Endothelial cell of umbilical vein (primary cell): ENCODE measurements at regions of chr12 and their contacts with region 1.

Region 1: GRCh38 chr12:122834104-122834920 is 945 bp upstream of the HIP1R start:
- DNase-seq: peak; percentile 83
- H3K4me3 ChIP-seq: peak overlapping the region; percentile 1 to 91 (median 53)
- H3K27ac ChIP-seq: peak overlapping the region; percentile 19
- H3K4me1 ChIP-seq: peaks cover 17% of the 10 kb centered on the region
- H3K27me3 ChIP-seq: no peaks in the 10 kb centered on the region
- CTCF ChIP-seq: no peak
- POLR2A ChIP-seq: no peak

Region 2: DNA sequence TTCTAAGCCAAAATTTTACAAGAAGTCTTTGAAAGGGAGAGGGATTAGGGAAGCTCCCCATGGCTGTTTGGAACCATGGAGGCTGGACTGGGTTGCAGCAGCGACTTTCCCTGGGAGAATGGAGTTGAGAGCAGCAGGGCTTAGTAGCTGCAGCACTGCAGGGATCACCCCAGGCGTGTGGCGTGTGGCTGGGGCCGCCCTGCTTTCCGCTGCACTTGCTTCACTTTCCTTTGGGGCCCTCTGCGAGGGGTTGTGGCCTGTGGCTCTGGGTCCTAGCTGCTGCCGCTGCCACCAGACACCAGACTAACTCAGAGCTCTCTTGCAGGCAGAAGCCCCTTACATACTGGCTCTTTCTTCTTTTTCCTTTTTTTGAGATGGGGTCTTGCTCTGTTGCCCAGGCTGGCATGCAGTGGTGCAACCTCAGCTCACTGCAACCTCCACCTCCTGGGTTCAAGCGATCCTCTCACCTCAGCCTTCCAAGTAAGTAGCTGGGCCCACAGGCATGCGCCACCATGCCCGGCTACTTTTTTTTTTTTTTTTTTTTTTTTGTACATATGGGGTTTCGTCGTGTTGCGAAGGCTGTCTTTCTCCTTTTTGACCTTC is 34.6 kb before region 1 on chr12:
- CTCF ChIA-PET with region 1: interaction called, 58 read pairs
- POLR2A ChIA-PET with region 1: no interaction called
- dilution Hi-C with region 1: no loop called
- intact Hi-C with region 1: loop called (anchors 5 kb)
- DNase-seq: no peak
- H3K4me3 ChIP-seq: no peak overlapping the region
- H3K27ac ChIP-seq: no peak overlapping the region
- H3K4me1 ChIP-seq: no peaks in the 10 kb centered on the region
- H3K27me3 ChIP-seq: no peaks in the 10 kb centered on the region
- CTCF ChIP-seq: no peak
- POLR2A ChIP-seq: no peak

Region 3: DNA sequence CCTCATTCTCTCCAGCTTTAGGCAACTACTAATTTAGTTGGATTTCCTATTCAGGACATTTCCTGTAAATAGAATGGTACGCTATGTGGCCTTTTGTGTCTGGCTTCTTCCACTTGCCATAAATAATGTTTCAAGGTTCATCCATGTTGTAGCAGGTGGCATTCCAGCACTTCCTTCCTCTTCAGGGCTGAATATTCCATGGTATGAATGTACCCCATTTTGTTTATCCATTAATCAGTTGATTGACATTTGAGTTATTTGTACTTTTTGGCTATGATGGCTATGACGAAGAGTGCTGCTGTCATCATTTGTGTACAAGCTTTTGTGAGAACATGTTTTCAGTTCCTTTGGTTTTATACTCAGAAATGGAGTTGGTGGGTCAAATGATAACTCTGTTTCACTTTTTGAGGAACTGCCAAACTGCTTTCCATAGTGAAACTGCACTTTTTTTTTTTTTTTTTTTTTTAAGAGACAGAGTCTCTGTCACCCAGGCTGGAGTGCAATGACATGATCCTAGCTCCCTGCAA is 443.9 kb after region 1 on chr12:
- CTCF ChIA-PET with region 1: no interaction called
- POLR2A ChIA-PET with region 1: no interaction called
- dilution Hi-C with region 1: no loop called
- intact Hi-C with region 1: no loop called
- DNase-seq: peak; percentile 87
- H3K4me3 ChIP-seq: peak overlapping the region in 1 of 3 experiments; percentile 28
- H3K27ac ChIP-seq: peak overlapping the region; percentile 68
- H3K4me1 ChIP-seq: peaks cover 11% of the 10 kb centered on the region
- H3K27me3 ChIP-seq: no peaks in the 10 kb centered on the region
- CTCF ChIP-seq: no peak
- POLR2A ChIP-seq: no peak

Region 4: GRCh38 chr12:124032265-124032886 is 1198.1 kb after region 1 on chr12:
- CTCF ChIA-PET with region 1: no interaction called
- POLR2A ChIA-PET with region 1: no interaction called
- dilution Hi-C with region 1: no loop called
- intact Hi-C with region 1: no loop called
- DNase-seq: peak; percentile 59
- H3K4me3 ChIP-seq: no peak overlapping the region
- H3K27ac ChIP-seq: no peak overlapping the region
- H3K4me1 ChIP-seq: peaks cover 6% of the 10 kb centered on the region
- H3K27me3 ChIP-seq: peaks cover 0 to 3% of the 10 kb centered on the region in 2 experiments
- CTCF ChIP-seq: peak; percentile 81 to 88
- POLR2A ChIP-seq: no peak